MCF 10A (cell line): ENCODE measurements at regions of chr7 and their contacts with region 1.

Region 1: DNA sequence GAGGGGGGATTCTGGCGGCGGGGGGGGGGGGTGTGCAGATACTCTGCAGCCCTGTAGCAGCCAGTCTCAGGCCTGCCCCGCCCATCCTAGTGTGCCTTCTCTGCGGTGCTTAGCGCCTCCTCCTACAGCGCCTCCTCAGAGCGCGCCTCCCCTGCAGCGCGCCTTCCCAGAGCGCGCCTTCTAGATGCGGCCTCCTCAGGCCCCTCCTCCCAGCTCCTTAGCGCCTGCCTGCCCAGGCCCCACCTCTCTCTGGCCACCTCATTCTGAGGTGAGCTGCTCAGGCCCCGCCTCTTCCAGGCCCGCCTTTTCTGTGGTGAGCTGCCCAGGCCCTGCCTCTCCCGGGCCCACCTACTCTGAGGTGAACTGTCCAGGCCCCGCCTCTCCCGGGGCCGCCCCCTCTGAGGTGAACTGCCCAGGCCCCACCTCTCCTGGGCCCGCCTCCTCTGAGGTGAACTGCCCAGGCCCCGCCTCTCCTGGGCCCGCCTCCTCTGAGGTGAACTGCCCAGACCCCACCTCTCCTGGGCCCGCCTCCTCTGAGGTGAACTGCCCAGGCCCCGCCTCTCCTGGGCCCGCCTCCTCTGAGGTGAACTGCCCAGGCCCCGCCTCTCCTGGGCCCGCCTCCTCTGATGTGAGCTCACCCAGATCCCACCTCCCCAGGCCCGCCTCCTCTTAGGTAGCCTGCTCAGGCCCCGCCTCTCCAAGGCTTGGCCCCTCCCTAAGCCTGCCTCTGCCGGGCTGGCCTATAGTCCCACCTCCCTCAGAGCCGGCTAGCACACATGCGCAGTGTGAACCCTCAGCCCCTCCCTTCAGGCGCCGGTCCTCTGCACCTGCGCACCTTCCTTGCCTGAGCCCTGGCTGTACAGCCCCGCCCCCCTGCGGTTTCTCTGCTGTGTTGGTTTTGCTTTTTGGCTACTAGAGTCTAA is 2.1 kb upstream of the SGCE start:
- DNase-seq: peak; percentile 94
- H3K4me3 Mint-ChIP-seq: peak overlapping the region; percentile 74
- H3K27ac Mint-ChIP-seq: no peak overlapping the region
- H3K4me1 Mint-ChIP-seq: no peaks in the 10 kb centered on the region
- H3K27me3 Mint-ChIP-seq: no peaks in the 10 kb centered on the region
- CTCF ChIP-seq: no peak

Region 2: DNA sequence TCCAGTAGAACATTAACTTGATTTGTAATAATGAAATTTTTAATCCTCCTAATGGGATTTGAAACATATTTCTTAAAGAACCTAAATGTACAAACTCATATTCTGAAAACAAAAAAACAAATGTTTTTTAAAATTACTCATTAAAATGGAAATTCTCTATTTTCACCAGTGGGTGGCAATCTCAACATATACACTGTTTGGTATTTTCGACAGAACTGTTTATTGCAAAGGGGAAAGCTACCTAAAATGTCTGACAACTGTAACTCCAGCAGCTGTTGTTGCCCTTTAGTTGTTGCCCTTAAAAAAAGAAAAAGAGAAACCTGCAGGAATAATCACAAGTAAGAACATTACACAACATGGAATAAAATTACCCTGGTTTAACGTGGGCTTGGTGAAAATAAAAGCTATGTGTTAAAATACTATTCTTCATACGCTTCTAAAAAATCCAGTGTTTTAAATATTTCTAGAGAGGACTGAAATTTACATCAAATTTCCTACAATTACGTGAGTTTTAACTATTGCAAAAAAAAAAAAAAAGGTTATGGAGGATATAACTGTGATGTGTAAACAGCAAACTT is 208.8 kb before region 1 on chr7:
- CTCF ChIA-PET with region 1: interaction called, 58 read pairs
- POLR2A ChIA-PET with region 1: interaction called, 19 read pairs
- intact Hi-C with region 1: loop called (anchors 1 kb)
- DNase-seq: peak; percentile 47
- H3K4me3 Mint-ChIP-seq: no peak overlapping the region
- H3K27ac Mint-ChIP-seq: no peak overlapping the region
- H3K4me1 Mint-ChIP-seq: no peaks in the 10 kb centered on the region
- H3K27me3 Mint-ChIP-seq: peaks cover 15% of the 10 kb centered on the region
- CTCF ChIP-seq: peak; percentile 52

Region 3: GRCh38 chr7:94620703-94621118 is 37.3 kb before region 1 on chr7:
- CTCF ChIA-PET with region 1: interaction called, 7 read pairs
- POLR2A ChIA-PET with region 1: interaction called, 17 read pairs
- intact Hi-C with region 1: loop called (anchors 2 kb)
- DNase-seq: peak; percentile 97
- H3K4me3 Mint-ChIP-seq: no peak overlapping the region
- H3K27ac Mint-ChIP-seq: peak overlapping the region; percentile 75
- H3K4me1 Mint-ChIP-seq: peaks cover 13% of the 10 kb centered on the region
- H3K27me3 Mint-ChIP-seq: no peaks in the 10 kb centered on the region
- CTCF ChIP-seq: no peak

Region 4: DNA sequence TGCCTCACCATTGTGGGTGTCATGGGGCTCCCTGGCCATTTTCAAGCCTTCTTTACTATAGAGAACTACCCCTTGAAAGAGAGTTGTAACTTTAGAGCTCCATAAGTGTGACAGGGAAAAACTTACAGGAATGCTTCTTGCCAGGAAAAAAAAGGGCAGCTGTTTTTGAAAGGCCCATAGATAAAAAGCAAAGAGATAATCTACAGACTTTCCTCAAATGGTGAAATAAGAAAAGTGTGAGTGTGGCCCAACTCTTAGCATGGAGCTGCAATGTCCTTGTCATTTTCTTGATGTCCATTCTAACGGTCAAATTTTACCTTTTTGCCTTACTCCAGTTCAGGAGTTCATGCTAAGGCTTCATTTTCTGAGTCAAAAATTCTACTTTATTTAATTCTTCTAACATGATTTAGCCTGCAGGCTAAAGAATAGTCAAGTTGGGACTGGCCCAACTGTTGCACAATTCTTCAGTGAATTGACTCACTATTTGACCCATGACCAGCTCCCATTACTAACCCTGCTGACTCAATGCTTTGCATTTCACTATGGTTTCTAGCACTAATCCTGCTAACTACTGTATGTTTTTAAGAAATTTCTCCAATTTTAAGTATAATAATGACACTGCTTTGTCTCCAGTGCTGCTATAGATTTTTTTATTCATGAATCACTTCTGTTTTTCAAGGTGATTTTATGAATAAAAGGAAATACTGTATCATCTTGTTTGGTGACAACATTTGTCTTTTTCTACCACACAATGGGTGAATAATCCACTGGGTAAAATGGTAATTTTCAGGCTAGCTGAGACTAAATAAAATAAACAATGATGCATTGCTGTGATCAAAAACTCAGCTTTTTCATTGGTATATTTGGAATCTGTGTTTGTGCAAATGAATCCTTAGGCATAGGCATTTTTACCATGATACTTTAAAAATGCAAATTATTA is 39.3 kb after region 1 on chr7:
- CTCF ChIA-PET with region 1: no interaction called
- POLR2A ChIA-PET with region 1: interaction called, 23 read pairs
- intact Hi-C with region 1: loop called (anchors 5 kb)
- DNase-seq: peak; percentile 97
- H3K4me3 Mint-ChIP-seq: no peak overlapping the region
- H3K27ac Mint-ChIP-seq: peak overlapping the region; percentile 49
- H3K4me1 Mint-ChIP-seq: peaks cover 25% of the 10 kb centered on the region
- H3K27me3 Mint-ChIP-seq: no peaks in the 10 kb centered on the region
- CTCF ChIP-seq: no peak

Region 5: GRCh38 chr7:94803821-94804220 is 145.8 kb after region 1 on chr7:
- CTCF ChIA-PET with region 1: no interaction called
- POLR2A ChIA-PET with region 1: no interaction called
- intact Hi-C with region 1: no loop called
- DNase-seq: no peak
- H3K4me3 Mint-ChIP-seq: no peak overlapping the region
- H3K27ac Mint-ChIP-seq: no peak overlapping the region
- H3K4me1 Mint-ChIP-seq: no peaks in the 10 kb centered on the region
- H3K27me3 Mint-ChIP-seq: no peaks in the 10 kb centered on the region
- CTCF ChIP-seq: no peak

Region 6: GRCh38 chr7:94940241-94940640 is 282.2 kb after region 1 on chr7:
- CTCF ChIA-PET with region 1: no interaction called
- POLR2A ChIA-PET with region 1: no interaction called
- intact Hi-C with region 1: no loop called
- DNase-seq: no peak
- H3K4me3 Mint-ChIP-seq: no peak overlapping the region
- H3K27ac Mint-ChIP-seq: no peak overlapping the region
- H3K4me1 Mint-ChIP-seq: no peaks in the 10 kb centered on the region
- H3K27me3 Mint-ChIP-seq: no peaks in the 10 kb centered on the region
- CTCF ChIP-seq: no peak

Region 7: DNA sequence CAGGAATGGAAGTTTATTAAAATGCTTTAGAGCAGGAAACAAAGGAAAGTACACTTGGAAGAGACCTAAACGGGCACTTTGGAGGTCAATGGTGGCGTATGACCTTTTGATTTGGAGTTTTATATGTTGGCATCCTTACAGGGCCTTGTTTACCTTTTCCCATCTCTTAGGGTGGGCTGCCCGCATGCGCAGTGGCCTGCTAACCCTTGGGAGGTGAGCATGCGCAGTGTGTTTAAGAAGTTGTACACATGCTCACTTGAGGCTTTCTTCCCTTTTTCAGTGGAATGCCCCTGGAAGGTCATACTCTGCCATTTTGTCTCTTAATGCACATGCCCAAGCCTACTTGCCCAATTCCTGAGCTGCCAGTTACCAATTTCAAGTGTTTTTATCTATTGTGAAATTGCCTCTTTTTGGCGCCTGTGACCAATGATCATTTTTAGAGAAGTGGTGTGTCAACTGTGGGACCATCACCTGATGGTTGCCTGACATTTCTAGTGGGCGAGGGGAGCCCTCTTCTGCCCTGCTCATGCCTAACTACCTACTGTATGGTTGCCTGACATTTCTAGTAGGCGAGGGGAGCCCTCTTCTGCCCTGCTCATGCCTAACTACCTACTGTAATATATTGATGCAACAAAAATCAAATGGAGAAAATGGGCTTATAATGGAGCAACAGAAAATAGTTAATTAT is 387.3 kb after region 1 on chr7:
- CTCF ChIA-PET with region 1: no interaction called
- POLR2A ChIA-PET with region 1: no interaction called
- intact Hi-C with region 1: loop called (anchors 1 kb)
- DNase-seq: peak; percentile 45
- H3K4me3 Mint-ChIP-seq: no peak overlapping the region
- H3K27ac Mint-ChIP-seq: no peak overlapping the region
- H3K4me1 Mint-ChIP-seq: no peaks in the 10 kb centered on the region
- H3K27me3 Mint-ChIP-seq: no peaks in the 10 kb centered on the region
- CTCF ChIP-seq: peak; percentile 23

Region 8: DNA sequence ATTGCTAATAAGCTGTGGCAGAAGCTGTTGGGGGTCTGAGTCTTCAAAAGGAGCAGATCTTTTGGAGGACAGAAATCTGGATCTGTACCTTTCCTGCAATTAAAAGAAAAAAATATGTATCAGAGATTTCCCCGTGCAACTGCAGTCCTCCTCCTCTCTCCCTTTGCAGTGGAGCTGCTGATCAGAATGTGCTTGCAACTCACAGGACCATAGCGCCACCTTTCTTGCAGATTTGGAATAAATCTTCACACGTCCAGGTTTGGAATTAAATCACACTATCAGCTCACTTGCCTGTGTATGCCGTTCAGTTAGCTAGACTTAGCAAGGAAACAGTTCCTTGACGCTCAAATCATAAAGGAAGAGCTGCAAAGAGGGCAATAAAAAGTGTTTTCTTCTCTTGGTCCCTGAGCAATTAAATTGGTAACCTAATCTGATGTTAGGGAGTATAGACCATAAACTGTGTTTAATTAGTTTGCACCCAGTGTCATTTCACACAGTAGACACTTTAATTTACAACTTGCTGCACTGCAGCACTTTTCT is 588.9 kb after region 1 on chr7:
- CTCF ChIA-PET with region 1: interaction called, 8 read pairs
- POLR2A ChIA-PET with region 1: no interaction called
- intact Hi-C with region 1: loop called (anchors 5 kb)
- DNase-seq: peak; percentile 79
- H3K4me3 Mint-ChIP-seq: no peak overlapping the region
- H3K27ac Mint-ChIP-seq: no peak overlapping the region
- H3K4me1 Mint-ChIP-seq: no peaks in the 10 kb centered on the region
- H3K27me3 Mint-ChIP-seq: no peaks in the 10 kb centered on the region
- CTCF ChIP-seq: peak; percentile 65